ENCODE measurements at regions of chr3 and their contacts with region 1.

Region 1: GRCh38 chr3:132507657-132508056 is 89.4 kb upstream of the ACKR4 start:
- DNase-seq: no peak
- H3K4me3 ChIP-seq: no peak overlapping the region
- H3K27ac ChIP-seq: no peak overlapping the region
- H3K4me1 ChIP-seq: no peaks in the 10 kb centered on the region
- H3K27me3 ChIP-seq: no peaks in the 10 kb centered on the region
- CTCF ChIP-seq: no peak

Region 2: GRCh38 chr3:132695422-132695821 is 187.8 kb after region 1 on chr3:
- intact Hi-C with region 1: loop called (anchors 10 kb)
- DNase-seq: no peak
- H3K4me3 ChIP-seq: no peak overlapping the region
- H3K27ac ChIP-seq: no peak overlapping the region
- H3K4me1 ChIP-seq: no peaks in the 10 kb centered on the region
- H3K27me3 ChIP-seq: no peaks in the 10 kb centered on the region
- CTCF ChIP-seq: no peak

Region 3: GRCh38 chr3:132709761-132710160 is 202.1 kb after region 1 on chr3:
- intact Hi-C with region 1: no loop called
- DNase-seq: no peak
- H3K4me3 ChIP-seq: no peak overlapping the region
- H3K27ac ChIP-seq: no peak overlapping the region
- H3K4me1 ChIP-seq: peaks cover 10% of the 10 kb centered on the region
- H3K27me3 ChIP-seq: no peaks in the 10 kb centered on the region
- CTCF ChIP-seq: no peak

Measured in left ventricle myocardium inferior (tissue), 1 donor.